ENCODE measurements at regions of chr9 and their contacts with region 1.

Region 1: GRCh38 chr9:114385412-114386181 is 2.2 kb downstream of the AKNA start:
- DNase-seq: peak; percentile 80 to 95 (median 94)
- H3K4me3 ChIP-seq: peak overlapping the region; percentile 98
- H3K4me3 Mint-ChIP-seq: peak overlapping the region; percentile 92 to 99 (median 96)
- H3K27ac ChIP-seq: peak overlapping the region; percentile 96
- H3K27ac Mint-ChIP-seq: peak overlapping the region; percentile 93 to 100 (median 98)
- H3K4me1 ChIP-seq: peaks cover 74% of the 10 kb centered on the region
- H3K4me1 Mint-ChIP-seq: peaks cover 67 to 83% (median 71%) of the 10 kb centered on the region in 3 donors
- H3K27me3 ChIP-seq: no peaks in the 10 kb centered on the region
- H3K27me3 Mint-ChIP-seq: peaks cover 0 to 7% of the 10 kb centered on the region in 2 donors

Region 2: GRCh38 chr9:114348906-114349482 is 36.6 kb before region 1 on chr9:
- CTCF ChIA-PET with region 1: interaction called, 8 read pairs
- POLR2A ChIA-PET with region 1: interaction called, 10 read pairs
- DNase-seq: peak; percentile 44 to 72 (median 60)
- H3K4me3 ChIP-seq: no peak overlapping the region
- H3K4me3 Mint-ChIP-seq: peak overlapping the region in 3 of 7 donors; percentile 32 to 61 (median 59)
- H3K27ac ChIP-seq: peak overlapping the region; percentile 33
- H3K27ac Mint-ChIP-seq: peak overlapping the region; percentile 82 to 97 (median 92)
- H3K4me1 ChIP-seq: peaks cover 41% of the 10 kb centered on the region
- H3K4me1 Mint-ChIP-seq: peaks cover 44 to 76% (median 48%) of the 10 kb centered on the region in 3 donors
- H3K27me3 ChIP-seq: no peaks in the 10 kb centered on the region
- H3K27me3 Mint-ChIP-seq: peaks cover 0 to 2% of the 10 kb centered on the region in 2 donors

Region 3: GRCh38 chr9:114366334-114367128 is 19.1 kb before region 1 on chr9:
- CTCF ChIA-PET with region 1: interaction called, 245 read pairs
- POLR2A ChIA-PET with region 1: interaction called, 341 read pairs
- DNase-seq: peak in 3 of 5 donors; percentile 71 to 78 (median 75)
- H3K4me3 ChIP-seq: peak overlapping the region; percentile 16
- H3K4me3 Mint-ChIP-seq: peak overlapping the region; percentile 47 to 82 (median 73)
- H3K27ac ChIP-seq: peak overlapping the region; percentile 68
- H3K27ac Mint-ChIP-seq: peak overlapping the region; percentile 55 to 99 (median 96)
- H3K4me1 ChIP-seq: peaks cover 98% of the 10 kb centered on the region
- H3K4me1 Mint-ChIP-seq: peaks cover 85 to 100% (median 90%) of the 10 kb centered on the region in 3 donors
- H3K27me3 ChIP-seq: no peaks in the 10 kb centered on the region
- H3K27me3 Mint-ChIP-seq: peaks cover 0 to 4% of the 10 kb centered on the region in 2 donors

Region 4: GRCh38 chr9:114372921-114373448 is 12.6 kb before region 1 on chr9:
- CTCF ChIA-PET with region 1: interaction called, 245 read pairs
- POLR2A ChIA-PET with region 1: interaction called, 341 read pairs
- DNase-seq: peak; percentile 83 to 95 (median 91)
- H3K4me3 ChIP-seq: peak overlapping the region; percentile 23
- H3K4me3 Mint-ChIP-seq: peak overlapping the region; percentile 72 to 91 (median 82)
- H3K27ac ChIP-seq: peak overlapping the region; percentile 81
- H3K27ac Mint-ChIP-seq: peak overlapping the region; percentile 81 to 99 (median 93)
- H3K4me1 ChIP-seq: peaks cover 94% of the 10 kb centered on the region
- H3K4me1 Mint-ChIP-seq: peaks cover 89 to 97% (median 95%) of the 10 kb centered on the region in 3 donors
- H3K27me3 ChIP-seq: no peaks in the 10 kb centered on the region
- H3K27me3 Mint-ChIP-seq: peaks cover 0 to 3% of the 10 kb centered on the region in 2 donors

Region 5: DNA sequence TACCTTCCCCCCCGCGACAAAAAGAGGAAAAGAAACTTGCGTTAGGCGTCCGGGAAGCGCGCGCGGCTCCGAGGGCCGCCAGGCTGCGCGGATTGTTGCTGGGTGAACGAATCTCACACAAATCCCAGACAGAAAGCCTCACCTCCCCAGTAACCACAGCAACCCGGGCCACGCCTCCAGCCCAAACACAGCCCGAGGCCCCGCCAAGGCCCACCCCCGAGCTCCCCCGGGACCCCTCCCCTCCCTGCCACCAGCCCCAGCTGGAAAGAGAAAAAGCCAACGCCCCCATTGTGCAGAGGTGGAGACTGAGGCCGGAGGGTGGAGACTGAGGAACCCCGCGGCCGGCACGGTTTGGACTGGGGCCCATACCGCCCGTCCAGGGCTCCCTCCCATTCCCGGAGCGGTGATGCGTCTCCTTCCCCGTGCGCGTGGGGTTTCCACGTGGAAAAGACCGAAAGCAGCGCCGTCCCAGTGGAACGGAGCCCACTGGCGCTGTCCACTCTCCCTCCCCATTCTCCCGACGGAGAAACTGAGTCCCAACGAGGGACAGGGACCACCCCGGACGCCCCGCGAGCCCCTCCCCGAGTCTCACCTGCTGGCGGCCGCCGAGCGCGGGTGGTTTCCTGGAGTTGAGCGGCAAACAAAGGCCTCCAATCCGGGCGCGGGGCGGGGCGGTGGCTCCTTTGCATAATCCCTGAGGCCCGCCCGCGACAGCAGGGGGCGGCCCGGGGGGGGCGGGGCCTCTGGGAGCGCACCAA is 12.4 kb after region 1 on chr9:
- CTCF ChIA-PET with region 1: interaction called, 50 read pairs
- POLR2A ChIA-PET with region 1: interaction called, 14 read pairs
- DNase-seq: peak; percentile 92 to 96 (median 95)
- H3K4me3 ChIP-seq: peak overlapping the region; percentile 89
- H3K4me3 Mint-ChIP-seq: peak overlapping the region; percentile 90 to 99 (median 99)
- H3K27ac ChIP-seq: peak overlapping the region; percentile 94
- H3K27ac Mint-ChIP-seq: peak overlapping the region; percentile 95 to 100 (median 97)
- H3K4me1 ChIP-seq: peaks cover 45% of the 10 kb centered on the region
- H3K4me1 Mint-ChIP-seq: peaks cover 36 to 48% (median 43%) of the 10 kb centered on the region in 3 donors
- H3K27me3 ChIP-seq: no peaks in the 10 kb centered on the region
- H3K27me3 Mint-ChIP-seq: peaks cover 0 to 2% of the 10 kb centered on the region in 2 donors

Region 6: GRCh38 chr9:114450833-114451706 is 65.5 kb after region 1 on chr9:
- CTCF ChIA-PET with region 1: no interaction called
- POLR2A ChIA-PET with region 1: no interaction called
- DNase-seq: peak in 3 of 5 donors; percentile 22 to 60 (median 23)
- H3K4me3 ChIP-seq: no peak overlapping the region
- H3K4me3 Mint-ChIP-seq: peak overlapping the region in 3 of 7 donors; percentile 23 to 50 (median 40)
- H3K27ac ChIP-seq: no peak overlapping the region
- H3K27ac Mint-ChIP-seq: peak overlapping the region in 7 of 8 donors; percentile 44 to 87 (median 70)
- H3K4me1 ChIP-seq: peaks cover 25% of the 10 kb centered on the region
- H3K4me1 Mint-ChIP-seq: peaks cover 26 to 50% (median 34%) of the 10 kb centered on the region in 3 donors
- H3K27me3 ChIP-seq: no peaks in the 10 kb centered on the region
- H3K27me3 Mint-ChIP-seq: peaks cover 2% of the 10 kb centered on the region in 2 donors